ENCODE measurements at regions of chr5 and their contacts with region 1.

Region 1: DNA sequence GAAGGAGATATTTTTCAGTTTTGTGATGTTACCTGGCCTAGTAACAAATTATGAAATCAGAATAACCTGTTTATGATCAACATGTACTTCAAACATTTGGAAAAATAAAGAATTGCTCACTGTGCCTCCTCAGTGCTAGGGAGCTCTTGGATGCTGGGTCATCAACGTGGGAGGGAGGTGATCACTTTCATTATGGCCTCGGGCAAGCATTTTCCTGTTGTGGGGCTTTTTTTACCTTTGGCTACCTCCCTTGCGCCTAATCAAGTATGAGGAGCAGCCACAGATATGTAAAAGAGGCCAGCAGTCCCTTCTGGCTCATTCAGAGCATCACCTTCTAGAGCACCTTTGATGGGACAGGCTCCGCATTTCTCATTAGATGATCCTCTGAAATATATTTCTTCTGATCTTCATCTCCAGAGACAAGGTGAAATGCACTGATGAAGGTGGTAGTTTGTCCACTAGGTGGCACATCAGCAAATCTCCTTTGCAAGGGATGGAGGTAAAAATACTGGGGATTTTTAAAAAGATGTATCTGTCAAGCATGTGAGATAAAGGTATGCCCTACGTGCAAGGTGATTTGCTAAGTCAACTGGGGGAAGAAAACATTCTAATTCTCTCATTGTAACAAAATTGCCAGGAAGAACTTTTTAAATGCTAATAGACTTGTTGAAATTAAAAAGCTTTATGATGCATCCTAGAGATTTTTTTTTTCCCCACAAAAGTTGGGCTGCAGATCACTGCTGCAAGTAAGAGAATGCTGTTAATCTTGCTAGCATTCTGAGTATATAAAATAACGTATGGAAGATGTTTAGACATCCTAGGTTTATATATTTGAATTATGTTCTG is 218.2 kb downstream of the MAST4 start:
- DNase-seq: no peak
- ATAC-seq: peak in 1 of 2 donors; percentile 67

Region 2: DNA sequence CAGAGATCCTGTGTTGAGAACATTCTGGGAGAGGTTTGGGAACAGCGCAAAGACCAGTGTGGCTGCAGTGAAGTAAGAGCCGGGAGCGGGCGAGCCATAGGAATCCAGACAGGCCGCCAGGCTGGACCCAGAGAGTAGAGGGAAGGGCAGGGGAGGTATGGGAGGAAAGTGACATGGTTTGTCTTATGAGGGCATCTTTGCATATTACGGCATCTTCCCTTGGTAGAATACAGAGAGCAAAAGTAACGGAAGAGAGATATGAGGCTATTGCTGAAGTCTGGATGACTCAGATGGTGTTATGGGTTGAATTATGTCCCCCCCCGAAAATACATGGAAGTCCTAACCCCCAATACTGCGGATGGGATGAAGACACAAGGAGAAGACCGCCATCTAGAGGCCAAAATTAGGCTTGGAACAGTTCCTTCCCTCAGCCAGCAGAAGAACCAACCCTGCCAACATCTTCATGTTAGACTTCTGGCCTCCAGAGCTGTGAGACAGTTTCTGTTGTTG is 50.0 kb after region 1 on chr5:
- intact Hi-C with region 1: loop called (anchors 5 to 10 kb)
- DNase-seq: peak; percentile 35
- ATAC-seq: peak; percentile 19 to 46

Region 3: GRCh38 chr5:67144183-67144639 is 329.8 kb after region 1 on chr5:
- intact Hi-C with region 1: no loop called
- DNase-seq: no peak
- ATAC-seq: no peak

Region 4: GRCh38 chr5:67156976-67157583 is 342.7 kb after region 1 on chr5:
- intact Hi-C with region 1: loop called in 1 of 2 experiments (anchors 10 kb)
- DNase-seq: no peak
- ATAC-seq: no peak